Motor neuron (in vitro differentiated cells): ENCODE measurements at regions of chr15 and their contacts with region 1.

Region 1: DNA sequence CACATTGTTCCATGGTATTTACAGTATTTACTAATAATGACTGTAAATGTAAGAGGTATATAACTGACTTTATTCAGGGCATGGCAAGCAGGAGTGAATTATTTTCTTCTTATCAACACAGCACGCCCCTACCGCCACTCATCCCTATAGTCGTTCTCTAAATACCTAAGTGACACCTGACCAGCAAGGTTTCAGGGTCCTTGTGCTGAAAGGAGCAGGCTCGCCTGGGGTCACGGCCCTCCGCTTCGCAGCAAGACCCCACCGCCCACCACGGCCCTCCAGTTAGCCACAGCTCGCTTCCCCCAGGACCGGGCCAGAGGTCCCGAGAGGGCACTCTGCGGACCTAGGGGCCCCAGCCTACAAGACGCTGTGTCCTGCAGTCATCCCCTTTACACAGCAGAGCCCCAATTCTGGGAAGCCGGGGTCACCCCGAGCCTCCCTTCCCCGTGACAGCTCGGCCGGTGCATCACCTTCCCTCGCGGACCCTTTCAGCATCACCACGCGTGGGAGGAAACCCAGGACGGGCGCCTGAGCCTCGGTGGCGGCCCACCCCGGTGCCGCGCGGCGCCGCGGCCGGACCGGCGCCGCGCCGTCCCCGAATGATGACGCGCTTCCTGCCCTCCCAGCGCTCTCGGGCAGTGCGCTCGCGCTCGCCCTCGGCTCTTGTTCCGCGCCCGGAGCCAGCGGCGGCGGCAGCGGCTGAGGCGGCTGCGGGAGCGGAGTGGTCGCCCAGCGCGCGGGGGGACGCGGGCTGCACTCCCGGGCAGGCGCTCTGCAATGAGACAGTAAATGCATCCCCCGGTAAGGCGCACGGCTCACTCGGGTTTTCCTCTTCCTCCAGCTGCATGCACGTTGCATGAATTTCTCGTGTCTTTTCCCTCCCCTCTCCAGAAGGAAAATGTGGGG is 225.1 kb upstream of the C2CD4B start:
- ATAC-seq: peak; percentile 72 to 87 (median 82)
- H3K4me3 ChIP-seq: peak within 1 kb of the TSS; percentile 70 to 94 (median 89)
- H3K27ac ChIP-seq: peak within 1 kb of the TSS; percentile 73 to 75
- H3K4me1 ChIP-seq: peaks cover 10 to 11% of the 10 kb centered on the region in 2 donors

Region 2: GRCh38 chr15:62209322-62209721 is 180.8 kb before region 1 on chr15:
- in situ Hi-C with region 1: no loop called
- ATAC-seq: no peak
- H3K4me3 ChIP-seq: no peak overlapping the region
- H3K27ac ChIP-seq: no peak overlapping the region
- H3K4me1 ChIP-seq: no peaks in the 10 kb centered on the region

Region 3: GRCh38 chr15:62742409-62743171 is 352.5 kb after region 1 on chr15:
- in situ Hi-C with region 1: loop called in 1 of 9 experiments (anchors 25 kb)
- ATAC-seq: peak; percentile 75 to 96 (median 89)
- H3K4me3 ChIP-seq: no peak overlapping the region
- H3K27ac ChIP-seq: peak overlapping the region in 1 of 2 donors; percentile 67
- H3K4me1 ChIP-seq: peaks cover 10 to 28% of the 10 kb centered on the region in 2 donors